AG04450 (cell line): ENCODE measurements at regions of chr2 and their contacts with region 1.

Region 1: DNA sequence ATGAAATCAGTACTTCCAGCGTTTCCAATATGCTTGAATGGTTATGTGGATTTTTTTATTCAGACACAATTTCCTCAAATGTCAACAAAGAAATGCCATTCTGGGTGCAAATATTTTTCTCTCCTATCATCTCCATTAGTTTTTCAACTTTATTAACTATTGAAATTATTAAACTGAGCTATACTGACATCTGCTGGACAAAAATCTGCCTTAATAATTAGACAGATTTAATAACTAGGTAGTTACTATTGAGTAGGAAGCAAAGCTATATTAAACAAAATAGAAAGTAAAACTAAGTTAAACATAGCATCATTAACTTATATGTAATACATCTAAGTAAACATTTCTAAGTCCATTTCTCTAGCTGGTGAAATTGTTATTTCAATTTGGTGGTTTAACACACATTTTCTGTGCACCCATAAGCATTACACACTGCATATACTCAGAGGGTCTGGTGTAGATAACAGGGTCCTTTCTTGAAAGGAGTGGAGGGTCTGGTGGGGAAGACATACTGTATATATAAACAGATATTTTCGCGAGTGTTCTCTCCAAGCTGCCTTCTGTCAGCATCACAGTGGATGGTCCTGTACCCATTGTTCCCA is 77.0 kb downstream of the LANCL1 start:
- DNase-seq: no peak
- H3K4me3 ChIP-seq: no peak overlapping the region
- H3K27ac ChIP-seq: no peak overlapping the region
- H3K27me3 ChIP-seq: no peaks in the 10 kb centered on the region
- CTCF ChIP-seq: peak; percentile 40

Region 2: DNA sequence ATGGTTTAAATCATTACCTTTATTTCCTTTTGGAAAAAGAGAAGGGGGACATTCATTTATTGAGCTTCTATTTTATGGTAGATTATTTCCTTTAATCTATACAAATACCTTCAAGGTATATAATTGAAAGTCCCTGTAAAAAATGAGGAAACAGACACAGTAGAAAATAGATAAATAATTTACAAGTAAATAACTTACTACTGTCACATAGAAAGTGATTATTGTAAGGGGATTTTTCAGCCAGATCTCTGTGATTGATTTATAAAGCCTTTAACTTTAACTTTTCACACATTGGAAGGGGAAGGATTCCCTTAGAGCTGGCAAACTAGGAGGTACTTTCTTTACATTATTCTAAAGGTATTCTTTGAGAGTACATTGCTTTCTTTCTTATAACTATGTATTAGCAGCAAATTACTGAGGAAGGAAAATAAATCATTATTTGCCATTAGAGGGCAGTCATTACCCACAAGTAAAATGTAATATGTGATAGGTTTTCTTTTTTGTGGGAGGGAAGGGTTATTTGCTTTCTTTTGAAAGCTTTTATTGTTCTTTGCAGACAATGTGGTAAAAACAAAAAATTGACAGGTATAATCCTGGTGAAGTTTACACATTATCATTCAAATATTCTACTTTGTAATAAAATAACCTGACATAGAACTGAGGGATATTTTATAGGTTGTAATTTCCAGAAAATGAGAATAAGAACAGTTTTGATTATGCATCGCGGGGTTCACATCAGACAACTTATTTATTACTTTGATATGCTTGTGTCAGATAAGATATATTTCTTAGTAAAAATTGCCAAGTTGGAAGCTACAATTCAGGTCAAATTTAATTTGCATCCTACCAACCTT is 421.9 kb before region 1 on chr2:
- CTCF ChIA-PET with region 1: interaction called, 12 read pairs
- POLR2A ChIA-PET with region 1: no interaction called
- DNase-seq: peak; percentile 4
- H3K4me3 ChIP-seq: no peak overlapping the region
- H3K27ac ChIP-seq: no peak overlapping the region
- H3K27me3 ChIP-seq: no peaks in the 10 kb centered on the region
- CTCF ChIP-seq: peak; percentile 50

Region 3: DNA sequence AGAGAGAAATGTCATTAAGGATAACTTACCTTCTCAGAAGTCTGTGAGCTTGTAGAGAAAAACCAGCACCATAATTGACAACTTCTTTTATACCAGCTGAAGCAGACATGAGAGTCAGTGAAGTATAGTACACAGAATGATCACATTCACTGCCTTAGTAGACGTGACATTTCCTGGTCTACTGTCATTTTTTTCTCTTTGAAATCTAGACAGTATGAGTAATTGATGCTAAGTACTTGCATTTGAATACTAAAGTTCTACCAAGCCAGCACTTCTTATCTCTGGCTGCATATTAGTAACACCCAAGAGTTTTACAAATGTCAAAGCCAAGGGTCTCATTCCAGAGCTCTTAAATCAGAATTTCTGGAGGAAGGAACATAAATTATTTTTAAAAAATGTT is 148.9 kb before region 1 on chr2:
- CTCF ChIA-PET with region 1: interaction called, 33 read pairs
- POLR2A ChIA-PET with region 1: no interaction called
- DNase-seq: no peak
- H3K4me3 ChIP-seq: no peak overlapping the region
- H3K27ac ChIP-seq: no peak overlapping the region
- H3K27me3 ChIP-seq: no peaks in the 10 kb centered on the region
- CTCF ChIP-seq: no peak

Region 4: GRCh38 chr2:210421916-210422315 is 22.4 kb after region 1 on chr2:
- CTCF ChIA-PET with region 1: no interaction called
- POLR2A ChIA-PET with region 1: no interaction called
- DNase-seq: no peak
- H3K4me3 ChIP-seq: no peak overlapping the region
- H3K27ac ChIP-seq: no peak overlapping the region
- H3K27me3 ChIP-seq: no peaks in the 10 kb centered on the region
- CTCF ChIP-seq: no peak

Region 5: GRCh38 chr2:210584834-210585233 is 185.3 kb after region 1 on chr2:
- CTCF ChIA-PET with region 1: no interaction called
- POLR2A ChIA-PET with region 1: no interaction called
- DNase-seq: no peak
- H3K4me3 ChIP-seq: no peak overlapping the region
- H3K27ac ChIP-seq: no peak overlapping the region
- H3K27me3 ChIP-seq: no peaks in the 10 kb centered on the region
- CTCF ChIP-seq: no peak